ENCODE measurements at regions of chr14 and their contacts with region 1.

Region 1: GRCh38 chr14:53306267-53306721 is 153.2 kb upstream of the DDHD1 start:
- DNase-seq: peak; percentile 56
- H3K4me3 ChIP-seq: peak overlapping the region; percentile 27 to 91 (median 41)
- H3K27ac ChIP-seq: no peak overlapping the region
- H3K4me1 ChIP-seq: no peaks in the 10 kb centered on the region
- H3K27me3 ChIP-seq: peaks cover 0 to 13% of the 10 kb centered on the region in 2 experiments
- CTCF ChIP-seq: peak; percentile 58 to 69
- POLR2A ChIP-seq: no peak

Region 2: GRCh38 chr14:52729925-52730667 is 576.2 kb before region 1 on chr14 and contains the start of gene STYX:
- CTCF ChIA-PET with region 1: no interaction called
- POLR2A ChIA-PET with region 1: no interaction called
- dilution Hi-C with region 1: no loop called
- intact Hi-C with region 1: loop called (anchors 2 kb)
- DNase-seq: peak; percentile 99
- H3K4me3 ChIP-seq: peak within 1 kb of the TSS; percentile 50 to 98 (median 88)
- H3K27ac ChIP-seq: peak within 1 kb of the TSS; percentile 29
- H3K4me1 ChIP-seq: peaks cover 3% of the 10 kb centered on the region
- H3K27me3 ChIP-seq: no peaks in the 10 kb centered on the region
- CTCF ChIP-seq: no peak
- POLR2A ChIP-seq: peak; percentile 78
- total RNA-seq, gene STYX: 21.0 and 21.3 TPM in 2 replicates

Region 3: GRCh38 chr14:52961060-52961639 is 345.1 kb before region 1 on chr14:
- CTCF ChIA-PET with region 1: interaction called, 42 read pairs
- POLR2A ChIA-PET with region 1: no interaction called
- dilution Hi-C with region 1: no loop called
- intact Hi-C with region 1: loop called (anchors 1 kb)
- DNase-seq: peak; percentile 74
- H3K4me3 ChIP-seq: no peak overlapping the region
- H3K27ac ChIP-seq: no peak overlapping the region
- H3K4me1 ChIP-seq: peaks cover 10% of the 10 kb centered on the region
- H3K27me3 ChIP-seq: peaks cover 0 to 2% of the 10 kb centered on the region in 2 experiments
- CTCF ChIP-seq: peak; percentile 66 to 67
- POLR2A ChIP-seq: no peak

Region 4: DNA sequence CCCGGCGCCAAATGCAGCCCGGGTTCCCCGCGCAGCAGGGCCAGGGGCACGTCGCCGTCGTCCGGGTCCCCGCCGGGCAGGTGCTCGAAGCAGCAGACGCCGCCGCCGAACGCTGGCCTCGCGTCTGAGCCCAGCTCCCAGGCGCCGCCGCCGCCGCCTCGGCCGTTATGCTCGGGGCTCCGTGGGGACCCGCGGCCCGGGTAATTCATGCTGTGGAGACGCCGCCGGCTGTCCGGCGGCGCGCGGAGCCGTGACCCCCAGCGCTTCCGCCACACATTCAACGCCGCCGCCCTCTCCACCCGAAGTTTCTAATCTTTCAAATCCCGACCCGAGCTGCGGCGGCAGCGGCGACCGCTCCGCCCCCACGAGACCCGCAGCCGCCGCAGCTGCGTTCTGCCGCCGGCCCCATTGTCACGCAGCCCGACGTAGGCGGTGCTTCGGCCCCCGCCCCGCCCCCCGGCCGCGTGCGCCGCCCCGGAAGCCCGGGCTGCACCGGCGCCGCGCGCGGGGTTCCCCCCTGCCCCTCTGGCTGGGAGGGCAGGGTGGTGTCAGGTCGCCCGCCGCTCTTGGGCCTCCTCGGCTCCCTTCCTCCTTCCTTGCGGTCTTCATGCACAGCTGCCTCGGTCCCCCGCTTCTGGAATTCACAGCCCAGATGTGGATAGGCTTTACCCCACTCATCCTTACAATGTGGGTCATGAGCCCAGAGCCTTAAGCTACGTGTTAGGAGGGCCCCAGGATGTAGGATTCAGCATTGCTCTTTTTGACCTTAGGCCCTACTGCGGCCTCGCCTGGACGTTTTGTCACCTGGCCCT is 153.2 kb before region 1 on chr14 and contains the start of gene DDHD1:
- CTCF ChIA-PET with region 1: interaction called, 13 read pairs
- POLR2A ChIA-PET with region 1: no interaction called
- dilution Hi-C with region 1: no loop called
- intact Hi-C with region 1: no loop called
- DNase-seq: peak; percentile 67
- H3K4me3 ChIP-seq: peak within 1 kb of the TSS; percentile 59 to 73 (median 61)
- H3K27ac ChIP-seq: peak within 1 kb of the TSS; percentile 61
- H3K4me1 ChIP-seq: peaks cover 8% of the 10 kb centered on the region
- H3K27me3 ChIP-seq: no peaks in the 10 kb centered on the region
- CTCF ChIP-seq: no peak
- POLR2A ChIP-seq: peak; percentile 66
- total RNA-seq, gene DDHD1: 12.4 and 13.9 TPM in 2 replicates

Region 5: DNA sequence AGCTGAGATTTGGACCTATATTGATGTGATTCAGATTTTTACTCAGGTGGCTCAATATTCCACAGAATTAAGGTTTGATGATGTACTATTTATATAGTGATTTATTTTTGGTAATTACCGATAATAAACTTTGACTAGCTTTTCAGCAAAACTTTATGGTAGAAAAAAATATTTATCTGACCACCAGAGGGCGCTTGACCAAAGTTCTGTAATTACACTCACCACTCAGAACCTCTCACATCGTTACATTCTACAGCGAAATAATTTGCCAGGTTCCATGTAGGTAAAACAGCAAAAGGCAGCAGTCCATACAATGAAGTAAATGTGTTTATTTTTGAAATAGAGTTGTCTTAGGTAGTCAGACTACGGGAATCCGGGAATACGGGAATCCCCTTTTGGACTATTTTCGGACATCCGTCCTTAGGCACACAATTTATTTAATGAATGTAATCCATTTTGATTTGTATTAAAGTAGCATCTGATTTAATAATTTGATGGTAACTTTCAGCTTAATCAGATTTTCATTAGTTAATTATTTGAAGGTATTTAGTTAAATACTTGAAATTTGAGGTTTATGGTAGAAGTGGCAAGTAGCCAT is 10.2 kb before region 1 on chr14:
- CTCF ChIA-PET with region 1: interaction called, 63 read pairs
- POLR2A ChIA-PET with region 1: no interaction called
- dilution Hi-C with region 1: no loop called
- intact Hi-C with region 1: no loop called
- DNase-seq: peak; percentile 48
- H3K4me3 ChIP-seq: no peak overlapping the region
- H3K27ac ChIP-seq: no peak overlapping the region
- H3K4me1 ChIP-seq: no peaks in the 10 kb centered on the region
- H3K27me3 ChIP-seq: peaks cover 0 to 2% of the 10 kb centered on the region in 2 experiments
- CTCF ChIP-seq: peak; percentile 41 to 45
- POLR2A ChIP-seq: no peak

Region 6: GRCh38 chr14:53325176-53325806 is 19.0 kb after region 1 on chr14:
- CTCF ChIA-PET with region 1: interaction called, 21 read pairs
- POLR2A ChIA-PET with region 1: no interaction called
- dilution Hi-C with region 1: no loop called
- intact Hi-C with region 1: no loop called
- DNase-seq: no peak
- H3K4me3 ChIP-seq: no peak overlapping the region
- H3K27ac ChIP-seq: no peak overlapping the region
- H3K4me1 ChIP-seq: peaks cover 2% of the 10 kb centered on the region
- H3K27me3 ChIP-seq: peaks cover 2 to 8% of the 10 kb centered on the region in 2 experiments
- CTCF ChIP-seq: peak in 1 of 2 donors; percentile 20
- POLR2A ChIP-seq: no peak

Region 7: GRCh38 chr14:53399057-53399456 is 92.8 kb after region 1 on chr14:
- CTCF ChIA-PET with region 1: interaction called, 12 read pairs
- POLR2A ChIA-PET with region 1: no interaction called
- dilution Hi-C with region 1: no loop called
- intact Hi-C with region 1: no loop called
- DNase-seq: peak; percentile 23
- H3K4me3 ChIP-seq: no peak overlapping the region
- H3K27ac ChIP-seq: no peak overlapping the region
- H3K4me1 ChIP-seq: no peaks in the 10 kb centered on the region
- H3K27me3 ChIP-seq: no peaks in the 10 kb centered on the region
- CTCF ChIP-seq: peak; percentile 14 to 17
- POLR2A ChIP-seq: no peak